Breast epithelium (tissue), 4 donors: ENCODE measurements at regions of chr12 and their contacts with region 1.

Region 1: GRCh38 chr12:107600581-107601144 is 84.9 kb upstream of the PWP1 start:
- DNase-seq: no peak
- H3K4me3 ChIP-seq: no peak overlapping the region
- H3K27ac ChIP-seq: no peak overlapping the region
- H3K4me1 ChIP-seq: no peaks in the 10 kb centered on the region
- H3K27me3 ChIP-seq: no peaks in the 10 kb centered on the region
- CTCF ChIP-seq: no peak
- POLR2A ChIP-seq: no peak

Region 2: GRCh38 chr12:106601031-106601430 is 999.6 kb before region 1 on chr12:
- intact Hi-C with region 1: no loop called
- DNase-seq: no peak
- H3K4me3 ChIP-seq: no peak overlapping the region
- H3K27ac ChIP-seq: no peak overlapping the region
- H3K4me1 ChIP-seq: no peaks in the 10 kb centered on the region
- H3K27me3 ChIP-seq: peaks cover 0 to 6% of the 10 kb centered on the region in 2 donors
- CTCF ChIP-seq: no peak
- POLR2A ChIP-seq: no peak

Region 3: GRCh38 chr12:107131832-107132616 is 468.6 kb before region 1 on chr12:
- intact Hi-C with region 1: loop called (anchors 5 kb)
- DNase-seq: peak in 1 of 2 donors; percentile 18
- H3K4me3 ChIP-seq: peak overlapping the region in 1 of 3 donors; percentile 35
- H3K27ac ChIP-seq: no peak overlapping the region
- H3K4me1 ChIP-seq: no peaks in the 10 kb centered on the region
- H3K27me3 ChIP-seq: no peaks in the 10 kb centered on the region
- CTCF ChIP-seq: peak; percentile 57 to 85 (median 75)
- POLR2A ChIP-seq: no peak

Region 4: DNA sequence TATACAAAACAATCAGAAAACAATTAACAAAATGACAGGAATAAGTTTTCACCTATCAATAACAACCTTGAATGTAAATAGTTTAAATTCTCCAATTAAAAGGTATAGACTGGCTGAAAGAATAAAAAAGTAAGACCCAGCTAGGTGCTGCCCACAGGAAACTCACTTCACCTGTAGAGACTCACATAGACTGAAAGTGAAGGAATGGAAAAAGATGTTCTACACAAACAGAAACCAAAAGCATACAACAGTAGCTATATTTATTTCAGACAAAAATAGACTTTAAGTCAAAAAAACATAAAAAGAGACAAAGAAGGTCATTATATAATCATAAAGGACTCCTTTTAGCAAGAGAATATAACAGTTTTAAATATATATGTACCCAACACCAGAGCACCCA is 67.4 kb before region 1 on chr12:
- intact Hi-C with region 1: loop called (anchors 5 kb)
- DNase-seq: no peak
- H3K4me3 ChIP-seq: no peak overlapping the region
- H3K27ac ChIP-seq: no peak overlapping the region
- H3K4me1 ChIP-seq: no peaks in the 10 kb centered on the region
- H3K27me3 ChIP-seq: no peaks in the 10 kb centered on the region
- CTCF ChIP-seq: no peak
- POLR2A ChIP-seq: no peak